ENCODE measurements at regions of chr7 and their contacts with region 1.

Region 1: DNA sequence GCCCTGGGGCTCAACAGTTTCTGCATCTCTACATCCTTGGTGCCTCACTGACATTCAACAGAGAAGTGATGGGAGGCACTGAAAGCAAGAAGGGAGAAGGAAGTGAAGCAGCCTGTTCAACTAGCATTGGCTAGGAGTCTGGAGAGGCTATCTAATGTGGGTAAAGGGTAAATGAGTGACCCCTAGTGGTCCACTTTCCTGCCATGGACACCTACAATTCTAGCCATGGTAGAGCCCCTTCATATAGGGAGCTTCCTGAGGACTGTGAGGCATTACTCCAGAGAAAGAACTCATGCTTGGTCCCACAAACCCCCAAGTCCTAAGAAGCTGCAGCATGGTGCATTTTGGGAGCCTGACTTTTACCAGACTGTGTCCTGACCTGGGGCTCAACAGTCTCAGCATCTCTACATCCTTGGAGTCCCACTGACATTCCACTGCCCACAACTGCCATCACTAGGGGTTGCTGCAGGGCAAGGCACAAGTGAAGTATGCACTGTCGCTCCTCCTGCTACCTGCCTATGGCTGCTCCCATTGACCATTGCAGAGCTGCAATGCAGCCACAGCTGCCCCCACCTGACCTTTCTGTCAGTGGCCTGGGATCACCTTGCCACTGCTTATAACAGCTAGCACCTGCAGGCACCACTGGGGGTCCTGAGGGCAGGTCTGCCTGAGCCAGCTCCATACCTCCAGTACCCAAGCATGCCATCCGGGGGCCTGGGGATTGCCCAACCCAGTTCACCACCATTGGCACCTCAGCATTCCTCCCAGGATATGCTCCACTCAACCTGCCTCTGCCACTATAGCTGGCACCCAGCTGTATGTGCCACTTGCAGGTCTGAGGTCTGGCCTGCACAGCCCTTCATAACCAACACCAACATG is 44.1 kb upstream of the CDK6 start:
- DNase-seq: peak; percentile 43
- H3K4me3 Mint-ChIP-seq: no peak overlapping the region
- H3K27ac Mint-ChIP-seq: no peak overlapping the region
- H3K4me1 Mint-ChIP-seq: peaks cover 34% of the 10 kb centered on the region
- H3K27me3 Mint-ChIP-seq: peaks cover 9% of the 10 kb centered on the region

Region 2: GRCh38 chr7:92691578-92691977 is 188.9 kb before region 1 on chr7:
- CTCF ChIA-PET with region 1: no interaction called
- intact Hi-C with region 1: loop called (anchors 1 kb)
- DNase-seq: peak; percentile 46
- H3K4me3 Mint-ChIP-seq: no peak overlapping the region
- H3K27ac Mint-ChIP-seq: peak overlapping the region; percentile 87
- H3K4me1 Mint-ChIP-seq: peaks cover 70% of the 10 kb centered on the region
- H3K27me3 Mint-ChIP-seq: no peaks in the 10 kb centered on the region

Measured in activated naive CD4-positive, alpha-beta T cell treated with anti-CD3 and anti-CD28 coated beads for 36 hours (primary cell).